ENCODE measurements at regions of chr22 and their contacts with region 1.

Region 1: GRCh38 chr22:28772633-28773460 is at the start of gene CCDC117:
- DNase-seq: peak; percentile 96
- ATAC-seq: peak; percentile 94
- H3K4me3 Mint-ChIP-seq: peak within 1 kb of the TSS; percentile 95
- H3K27ac Mint-ChIP-seq: peak within 1 kb of the TSS; percentile 94
- H3K4me1 Mint-ChIP-seq: peaks cover 29% of the 10 kb centered on the region
- H3K27me3 Mint-ChIP-seq: peaks cover 7% of the 10 kb centered on the region
- total RNA-seq, gene CCDC117: 36.7 to 40.0 TPM

Region 2: DNA sequence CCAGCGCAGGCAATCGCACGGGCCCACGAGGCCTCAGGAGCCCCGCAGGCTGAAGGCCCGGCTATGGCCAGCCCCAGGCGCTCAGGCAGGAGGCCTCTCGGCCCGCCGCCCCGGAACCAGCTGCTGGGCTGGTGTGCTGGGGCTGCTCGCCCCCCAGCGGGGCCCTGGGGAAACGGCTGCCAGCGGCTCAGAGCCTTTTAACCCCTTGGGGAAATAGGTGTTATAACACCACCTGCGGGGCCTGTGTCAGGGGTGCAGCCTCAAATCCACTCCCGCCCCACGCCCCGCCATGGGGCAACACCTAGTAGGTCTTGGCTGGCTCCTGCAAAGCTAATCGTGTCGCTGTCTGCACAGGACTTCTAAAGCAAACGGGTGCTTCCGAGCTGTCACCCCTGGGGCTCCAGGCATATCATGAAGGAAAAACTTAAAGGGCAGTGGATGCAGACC is 330.6 kb before region 1 on chr22:
- CTCF ChIA-PET with region 1: no interaction called
- POLR2A ChIA-PET with region 1: no interaction called
- DNase-seq: peak; percentile 83
- ATAC-seq: peak; percentile 96
- H3K4me3 Mint-ChIP-seq: peak overlapping the region; percentile 68
- H3K27ac Mint-ChIP-seq: no peak overlapping the region
- H3K4me1 Mint-ChIP-seq: peaks cover 18% of the 10 kb centered on the region
- H3K27me3 Mint-ChIP-seq: peaks cover 29% of the 10 kb centered on the region

Region 3: GRCh38 chr22:28620244-28620922 is 152.5 kb before region 1 on chr22:
- CTCF ChIA-PET with region 1: no interaction called
- POLR2A ChIA-PET with region 1: no interaction called
- DNase-seq: no peak
- ATAC-seq: no peak
- H3K4me3 Mint-ChIP-seq: no peak overlapping the region
- H3K27ac Mint-ChIP-seq: no peak overlapping the region
- H3K4me1 Mint-ChIP-seq: no peaks in the 10 kb centered on the region
- H3K27me3 Mint-ChIP-seq: peaks cover 49% of the 10 kb centered on the region

Region 4: GRCh38 chr22:28741758-28742561 is 30.9 kb before region 1 on chr22 and contains the starts of genes CHEK2 and HSCB:
- CTCF ChIA-PET with region 1: interaction called, 8 read pairs
- POLR2A ChIA-PET with region 1: interaction called, 24 read pairs
- DNase-seq: peak; percentile 99
- ATAC-seq: peak; percentile 93
- H3K4me3 Mint-ChIP-seq: peak within 1 kb of the TSS; percentile 87
- H3K27ac Mint-ChIP-seq: peak within 1 kb of the TSS; percentile 82
- H3K4me1 Mint-ChIP-seq: peaks cover 40% of the 10 kb centered on the region
- H3K27me3 Mint-ChIP-seq: no peaks in the 10 kb centered on the region
- total RNA-seq, gene CHEK2: 43.7 to 47.9 TPM
- total RNA-seq, gene HSCB: 13.7 to 15.8 TPM

Region 5: GRCh38 chr22:28783786-28784671 is 11.2 kb after region 1 on chr22:
- CTCF ChIA-PET with region 1: interaction called, 17 read pairs
- POLR2A ChIA-PET with region 1: interaction called, 4 read pairs
- DNase-seq: no peak
- ATAC-seq: no peak
- H3K4me3 Mint-ChIP-seq: no peak overlapping the region
- H3K27ac Mint-ChIP-seq: peak overlapping the region; percentile 6
- H3K4me1 Mint-ChIP-seq: peaks cover 19% of the 10 kb centered on the region
- H3K27me3 Mint-ChIP-seq: no peaks in the 10 kb centered on the region

Measured in activated CD8-positive, alpha-beta T cell treated with anti-CD3 and anti-CD28 coated beads, Interleukin-2, amount 10 ng/mL, durations not matched to agents 7 days and 5 days (primary cell).